ENCODE measurements at regions of chr3 and their contacts with region 1.

Region 1: GRCh38 chr3:152524198-152525140 is 255.7 kb downstream of the MBNL1 start:
- DNase-seq: no peak
- H3K4me3 ChIP-seq: no peak overlapping the region
- H3K27ac ChIP-seq: no peak overlapping the region
- H3K4me1 ChIP-seq: no peaks in the 10 kb centered on the region
- H3K27me3 ChIP-seq: no peaks in the 10 kb centered on the region
- CTCF ChIP-seq: peak; percentile 83 to 93 (median 87)
- EP300 ChIP-seq: no peak
- POLR2A ChIP-seq: no peak

Region 2: DNA sequence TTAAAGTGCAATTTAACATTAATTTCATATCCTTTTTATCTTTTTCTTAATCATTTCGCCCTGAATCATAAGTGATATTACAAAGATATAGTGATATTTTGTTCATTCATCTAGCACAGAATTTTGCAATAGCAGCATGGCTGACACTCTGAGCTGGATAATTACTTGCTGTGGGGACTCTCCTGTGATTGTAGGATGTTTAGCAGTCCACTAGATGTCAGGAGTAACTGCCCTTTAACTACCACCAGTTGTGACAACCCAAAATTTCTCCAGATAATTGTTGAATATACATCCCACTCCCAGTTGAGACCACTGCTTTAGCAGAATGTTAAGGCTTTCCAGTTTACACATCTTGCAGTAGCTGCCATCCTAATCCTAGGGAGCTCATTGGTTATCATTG is 452.5 kb before region 1 on chr3:
- intact Hi-C with region 1: loop called (anchors 5 kb)
- DNase-seq: no peak
- H3K4me3 ChIP-seq: no peak overlapping the region
- H3K27ac ChIP-seq: no peak overlapping the region
- H3K4me1 ChIP-seq: peaks cover 4 to 22% (median 17%) of the 10 kb centered on the region in 4 donors
- H3K27me3 ChIP-seq: no peaks in the 10 kb centered on the region
- CTCF ChIP-seq: peak; percentile 26 to 48 (median 32)
- EP300 ChIP-seq: no peak
- POLR2A ChIP-seq: no peak

Region 3: DNA sequence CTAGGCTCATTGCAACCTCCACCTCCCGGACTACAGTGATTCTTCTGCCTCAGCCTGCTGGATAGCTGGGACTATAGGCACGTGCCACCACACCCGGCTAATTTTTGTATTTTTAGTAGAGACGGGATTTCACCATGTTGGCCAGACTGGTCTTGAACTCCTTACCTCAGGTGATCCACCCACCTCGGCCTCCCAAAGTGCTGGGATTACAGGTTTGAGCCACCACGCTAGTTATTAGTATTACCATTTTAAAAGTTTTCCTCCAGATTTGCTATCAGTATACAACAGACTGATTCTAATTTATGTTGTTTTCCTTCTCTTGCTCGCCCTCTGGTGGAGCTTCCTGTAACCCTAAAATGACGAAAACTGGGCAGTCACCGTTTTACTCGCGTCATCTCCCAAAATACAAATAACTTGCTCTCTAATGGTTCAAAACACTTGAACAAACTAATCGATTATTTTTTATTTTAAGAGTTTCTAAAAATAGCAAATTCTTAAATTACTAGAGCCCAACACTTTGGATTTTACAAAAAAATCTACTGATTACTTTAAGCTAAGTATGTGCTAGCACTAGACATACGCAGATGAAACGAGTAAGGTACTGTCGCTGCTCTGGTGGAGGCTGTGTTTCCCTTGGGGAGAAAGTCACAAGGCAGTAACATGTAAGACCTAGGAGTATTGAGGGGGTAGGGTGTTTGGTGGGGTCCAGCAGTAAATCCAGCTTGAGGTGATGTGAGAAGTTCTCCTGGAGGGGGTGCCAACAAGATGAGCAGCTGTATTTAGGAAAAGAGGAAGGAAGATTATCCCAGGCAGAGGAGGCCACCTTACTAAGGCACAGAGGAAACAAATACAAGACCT is 52.4 kb before region 1 on chr3:
- intact Hi-C with region 1: loop called (anchors 2 kb)
- DNase-seq: no peak
- H3K4me3 ChIP-seq: peak overlapping the region; percentile 20 to 33 (median 28)
- H3K27ac ChIP-seq: peak overlapping the region in 2 of 4 donors; percentile 17 to 24
- H3K4me1 ChIP-seq: peaks cover 0 to 10% (median 3%) of the 10 kb centered on the region in 4 donors
- H3K27me3 ChIP-seq: no peaks in the 10 kb centered on the region
- CTCF ChIP-seq: peak; percentile 56 to 78 (median 75)
- EP300 ChIP-seq: no peak
- POLR2A ChIP-seq: no peak

Measured in esophagus muscularis mucosa (tissue), 4 donors.